Sciatic nerve (tissue), 2 donors: ENCODE measurements at regions of chr11 and their contacts with region 1.

Region 1: DNA sequence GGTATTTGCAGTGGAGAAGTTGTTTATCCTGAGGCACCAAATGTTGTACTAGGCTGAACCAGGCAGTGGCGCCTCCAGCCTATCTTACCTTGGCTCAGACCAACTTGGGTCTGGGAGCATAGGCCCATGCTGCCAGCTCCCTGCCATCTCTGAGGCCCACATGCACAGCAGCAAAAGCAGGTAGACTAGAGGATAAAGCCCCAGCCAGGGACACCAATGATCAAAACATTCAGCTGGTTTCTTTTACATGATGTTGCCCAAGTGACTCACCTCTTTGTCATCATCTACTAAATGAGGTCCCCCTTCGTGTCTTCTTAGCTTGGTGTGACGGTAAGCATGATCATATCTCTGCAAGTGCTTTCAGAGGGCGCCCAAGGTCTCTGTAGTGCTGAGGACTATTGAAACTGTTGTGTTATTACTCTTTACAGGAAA is 112.1 kb upstream of the DRD2 start:
- DNase-seq: no peak
- ATAC-seq: peak; percentile 44

Region 2: DNA sequence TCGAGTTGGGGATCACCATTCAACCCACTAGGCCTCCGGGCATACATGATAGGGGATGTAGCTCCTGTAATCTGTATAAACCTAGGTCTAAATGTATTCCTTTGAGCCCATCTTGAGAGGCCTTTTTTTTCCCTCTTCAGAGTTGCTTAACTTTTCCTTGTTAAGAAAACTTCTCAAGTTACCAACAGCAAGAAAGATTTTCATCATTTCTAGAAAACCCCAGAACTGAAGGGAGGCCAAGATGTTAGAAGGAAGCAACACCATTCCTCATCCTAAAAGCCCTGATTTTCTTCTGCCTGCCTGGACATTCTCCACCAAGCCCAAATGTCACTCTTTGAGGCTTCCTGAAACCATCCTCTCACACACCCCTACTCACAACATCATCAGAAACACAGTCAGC is 39.4 kb after region 1 on chr11:
- intact Hi-C with region 1: loop called (anchors 1 kb)
- DNase-seq: no peak
- ATAC-seq: no peak

Region 3: GRCh38 chr11:113721462-113722066 is 134.2 kb after region 1 on chr11:
- intact Hi-C with region 1: loop called (anchors 5 kb)
- DNase-seq: no peak
- ATAC-seq: no peak